Naive thymus-derived CD4-positive, alpha-beta T cell (primary cell): ENCODE measurements at regions of chr6 and their contacts with region 1.

Region 1: GRCh38 chr6:100001915-100002388 is 7.9 kb upstream of the MCHR2 start:
- DNase-seq: peak in 6 of 9 donors; percentile 9 to 33 (median 22)
- ATAC-seq: peak; percentile 70
- H3K4me3 ChIP-seq: no peak overlapping the region
- H3K4me3 Mint-ChIP-seq: no peak overlapping the region
- H3K27ac ChIP-seq: no peak overlapping the region
- H3K27ac Mint-ChIP-seq: no peak overlapping the region
- H3K4me1 ChIP-seq: no peaks in the 10 kb centered on the region
- H3K4me1 Mint-ChIP-seq: no peaks in the 10 kb centered on the region
- H3K27me3 ChIP-seq: no peaks in the 10 kb centered on the region
- H3K27me3 Mint-ChIP-seq: peaks cover 19 to 29% (median 23%) of the 10 kb centered on the region in 5 donors

Region 2: GRCh38 chr6:99761711-99762110 is 240.2 kb before region 1 on chr6:
- CTCF ChIA-PET with region 1: no interaction called
- POLR2A ChIA-PET with region 1: no interaction called
- intact Hi-C with region 1: no loop called
- DNase-seq: no peak
- ATAC-seq: no peak
- H3K4me3 ChIP-seq: no peak overlapping the region
- H3K4me3 Mint-ChIP-seq: no peak overlapping the region
- H3K27ac ChIP-seq: no peak overlapping the region
- H3K27ac Mint-ChIP-seq: no peak overlapping the region
- H3K4me1 ChIP-seq: no peaks in the 10 kb centered on the region
- H3K4me1 Mint-ChIP-seq: no peaks in the 10 kb centered on the region
- H3K27me3 ChIP-seq: no peaks in the 10 kb centered on the region
- H3K27me3 Mint-ChIP-seq: peaks cover 0 to 26% (median 5%) of the 10 kb centered on the region in 5 donors

Region 3: GRCh38 chr6:99868074-99868702 is 133.8 kb before region 1 on chr6:
- CTCF ChIA-PET with region 1: no interaction called
- POLR2A ChIA-PET with region 1: no interaction called
- intact Hi-C with region 1: loop called in 1 of 2 experiments (anchors 10 kb)
- DNase-seq: peak; percentile 20 to 66 (median 50)
- ATAC-seq: peak; percentile 70
- H3K4me3 ChIP-seq: no peak overlapping the region
- H3K4me3 Mint-ChIP-seq: peak overlapping the region in 4 of 10 donors; percentile 11 to 42 (median 12)
- H3K27ac ChIP-seq: no peak overlapping the region
- H3K27ac Mint-ChIP-seq: peak overlapping the region in 1 of 9 donors; percentile 18
- H3K4me1 ChIP-seq: no peaks in the 10 kb centered on the region
- H3K4me1 Mint-ChIP-seq: peaks cover 0 to 9% (median 5%) of the 10 kb centered on the region in 7 donors
- H3K27me3 ChIP-seq: peaks cover 0 to 4% of the 10 kb centered on the region in 2 donors
- H3K27me3 Mint-ChIP-seq: peaks cover 20 to 38% (median 25%) of the 10 kb centered on the region in 5 donors

Region 4: GRCh38 chr6:100099189-100100074 is 97.5 kb after region 1 on chr6:
- CTCF ChIA-PET with region 1: no interaction called
- POLR2A ChIA-PET with region 1: no interaction called
- intact Hi-C with region 1: loop called in 1 of 2 experiments (anchors 1 kb)
- DNase-seq: no peak
- ATAC-seq: no peak
- H3K4me3 ChIP-seq: no peak overlapping the region
- H3K4me3 Mint-ChIP-seq: no peak overlapping the region
- H3K27ac ChIP-seq: no peak overlapping the region
- H3K27ac Mint-ChIP-seq: no peak overlapping the region
- H3K4me1 ChIP-seq: no peaks in the 10 kb centered on the region
- H3K4me1 Mint-ChIP-seq: no peaks in the 10 kb centered on the region
- H3K27me3 ChIP-seq: no peaks in the 10 kb centered on the region
- H3K27me3 Mint-ChIP-seq: peaks cover 4 to 15% (median 9%) of the 10 kb centered on the region in 5 donors

Region 5: GRCh38 chr6:100479179-100480035 is 477.5 kb after region 1 on chr6:
- CTCF ChIA-PET with region 1: no interaction called
- POLR2A ChIA-PET with region 1: no interaction called
- intact Hi-C with region 1: loop called in 1 of 2 experiments (anchors 1 kb)
- DNase-seq: no peak
- ATAC-seq: peak; percentile 34
- H3K4me3 ChIP-seq: no peak overlapping the region
- H3K4me3 Mint-ChIP-seq: no peak overlapping the region
- H3K27ac ChIP-seq: no peak overlapping the region
- H3K27ac Mint-ChIP-seq: no peak overlapping the region
- H3K4me1 ChIP-seq: no peaks in the 10 kb centered on the region
- H3K4me1 Mint-ChIP-seq: no peaks in the 10 kb centered on the region
- H3K27me3 ChIP-seq: no peaks in the 10 kb centered on the region
- H3K27me3 Mint-ChIP-seq: peaks cover 26 to 37% (median 28%) of the 10 kb centered on the region in 5 donors

Region 6: DNA sequence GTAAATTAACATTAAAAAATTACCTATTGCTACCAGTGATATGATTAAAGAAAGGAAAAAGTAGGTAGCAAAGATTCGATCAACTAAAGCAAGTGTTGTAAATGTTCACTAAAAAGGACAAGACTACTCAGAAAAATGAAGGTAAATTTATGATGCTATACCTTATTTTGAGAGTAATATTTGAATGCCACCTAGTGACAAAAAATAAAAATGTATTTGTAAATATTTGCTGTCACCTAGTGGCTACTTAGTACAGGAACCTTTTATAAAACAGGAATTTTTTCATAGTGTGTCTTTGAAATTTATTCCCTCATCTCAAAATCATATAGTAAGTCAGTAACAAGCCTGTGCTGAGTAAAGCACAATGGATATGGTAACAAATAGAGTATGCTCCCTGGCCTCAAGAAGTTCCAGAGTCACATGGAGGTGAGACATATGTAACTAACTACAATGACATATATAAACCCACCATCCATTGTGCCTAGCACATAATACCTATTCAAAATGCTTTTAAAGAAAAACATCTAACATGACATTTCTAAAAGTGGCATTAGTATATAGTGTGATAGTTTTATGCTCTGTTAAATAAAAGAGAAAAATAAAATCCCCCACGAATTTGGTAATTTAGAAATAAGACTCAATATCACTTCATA is 655.9 kb after region 1 on chr6:
- CTCF ChIA-PET with region 1: no interaction called
- POLR2A ChIA-PET with region 1: no interaction called
- intact Hi-C with region 1: loop called in 1 of 2 experiments (anchors 1 kb)
- DNase-seq: peak in 1 of 9 donors; percentile 3
- ATAC-seq: no peak
- H3K4me3 ChIP-seq: no peak overlapping the region
- H3K4me3 Mint-ChIP-seq: no peak overlapping the region
- H3K27ac ChIP-seq: no peak overlapping the region
- H3K27ac Mint-ChIP-seq: no peak overlapping the region
- H3K4me1 ChIP-seq: no peaks in the 10 kb centered on the region
- H3K4me1 Mint-ChIP-seq: no peaks in the 10 kb centered on the region
- H3K27me3 ChIP-seq: no peaks in the 10 kb centered on the region
- H3K27me3 Mint-ChIP-seq: no peaks in the 10 kb centered on the region

Region 7: GRCh38 chr6:100664274-100665040 is 662.5 kb after region 1 on chr6:
- CTCF ChIA-PET with region 1: interaction called, 3 read pairs
- POLR2A ChIA-PET with region 1: no interaction called
- intact Hi-C with region 1: loop called in 1 of 2 experiments (anchors 2 kb)
- DNase-seq: peak in 4 of 9 donors; percentile 4 to 27 (median 22)
- ATAC-seq: peak; percentile 59
- H3K4me3 ChIP-seq: no peak overlapping the region
- H3K4me3 Mint-ChIP-seq: no peak overlapping the region
- H3K27ac ChIP-seq: no peak overlapping the region
- H3K27ac Mint-ChIP-seq: peak overlapping the region in 5 of 9 donors; percentile 1 to 74 (median 22)
- H3K4me1 ChIP-seq: no peaks in the 10 kb centered on the region
- H3K4me1 Mint-ChIP-seq: peaks cover 0 to 12% (median 5%) of the 10 kb centered on the region in 7 donors
- H3K27me3 ChIP-seq: no peaks in the 10 kb centered on the region
- H3K27me3 Mint-ChIP-seq: no peaks in the 10 kb centered on the region

Region 8: GRCh38 chr6:100719883-100720682 is 718.1 kb after region 1 on chr6:
- CTCF ChIA-PET with region 1: no interaction called
- POLR2A ChIA-PET with region 1: no interaction called
- intact Hi-C with region 1: loop called in 1 of 2 experiments (anchors 5 kb)
- DNase-seq: no peak
- ATAC-seq: no peak
- H3K4me3 ChIP-seq: no peak overlapping the region
- H3K4me3 Mint-ChIP-seq: peak overlapping the region in 3 of 10 donors; percentile 17 to 30 (median 19)
- H3K27ac ChIP-seq: no peak overlapping the region
- H3K27ac Mint-ChIP-seq: peak overlapping the region in 3 of 9 donors; percentile 3 to 12 (median 10)
- H3K4me1 ChIP-seq: no peaks in the 10 kb centered on the region
- H3K4me1 Mint-ChIP-seq: peaks cover 5 to 16% (median 8%) of the 10 kb centered on the region in 7 donors
- H3K27me3 ChIP-seq: no peaks in the 10 kb centered on the region
- H3K27me3 Mint-ChIP-seq: no peaks in the 10 kb centered on the region